ENCODE measurements at regions of chr10 and their contacts with region 1.

Region 1: DNA sequence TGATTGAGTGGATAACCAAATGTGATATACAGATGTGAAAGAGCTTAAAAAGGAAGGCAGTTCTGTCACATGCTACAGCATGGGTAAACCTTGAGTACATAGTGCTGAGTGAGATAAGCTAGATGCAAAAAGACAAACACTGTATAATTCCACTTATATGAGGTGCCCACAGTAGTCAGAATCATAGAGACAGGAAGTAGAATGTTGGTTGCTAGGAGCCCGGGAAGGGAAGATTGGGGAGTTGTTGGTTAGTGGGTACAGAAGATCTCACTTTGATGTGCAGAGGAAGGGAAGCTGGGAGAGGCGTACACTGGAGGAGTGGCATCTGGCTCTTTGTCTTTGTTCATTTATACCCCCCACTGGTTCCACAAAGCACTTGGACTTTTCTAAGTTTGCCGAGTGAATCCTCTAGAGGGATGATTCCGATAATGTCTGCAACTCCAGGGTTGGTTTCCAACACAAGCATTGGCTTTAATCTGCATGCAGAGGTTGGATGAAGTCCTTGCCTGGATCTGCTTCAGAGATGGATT is 39.5 kb downstream of the TSPAN14 start:
- DNase-seq: peak in 5 of 10 donors; percentile 42 to 54 (median 47)
- ATAC-seq: peak; percentile 76 to 78
- H3K4me3 Mint-ChIP-seq: peak overlapping the region; percentile 17 to 84 (median 68)
- H3K27ac Mint-ChIP-seq: peak overlapping the region; percentile 6 to 97 (median 86)
- H3K4me1 Mint-ChIP-seq: peaks cover 57 to 98% (median 97%) of the 10 kb centered on the region in 4 donors
- H3K27me3 Mint-ChIP-seq: no peaks in the 10 kb centered on the region

Region 2: GRCh38 chr10:80413271-80413996 is 80.2 kb before region 1 on chr10:
- POLR2A ChIA-PET with region 1: no interaction called
- DNase-seq: no peak
- ATAC-seq: no peak
- H3K4me3 Mint-ChIP-seq: no peak overlapping the region
- H3K27ac Mint-ChIP-seq: peak overlapping the region in 2 of 10 donors; percentile 40 to 45
- H3K4me1 Mint-ChIP-seq: peaks cover 12 to 45% (median 25%) of the 10 kb centered on the region in 4 donors
- H3K27me3 Mint-ChIP-seq: no peaks in the 10 kb centered on the region

Region 3: GRCh38 chr10:80453701-80454513 is 39.7 kb before region 1 on chr10 and contains the start of gene TSPAN14:
- POLR2A ChIA-PET with region 1: interaction called, 914 read pairs
- DNase-seq: peak; percentile 47 to 80 (median 68)
- ATAC-seq: peak; percentile 61 to 71
- H3K4me3 Mint-ChIP-seq: peak within 1 kb of the TSS in 9 of 10 donors; percentile 85 to 99 (median 98)
- H3K27ac Mint-ChIP-seq: peak within 1 kb of the TSS; percentile 94 to 100 (median 97)
- H3K4me1 Mint-ChIP-seq: peaks cover 19 to 52% (median 42%) of the 10 kb centered on the region in 4 donors
- H3K27me3 Mint-ChIP-seq: no peaks in the 10 kb centered on the region
- polyA plus RNA-seq, gene TSPAN14: 152 to 293 (median 155) TPM

Region 4: DNA sequence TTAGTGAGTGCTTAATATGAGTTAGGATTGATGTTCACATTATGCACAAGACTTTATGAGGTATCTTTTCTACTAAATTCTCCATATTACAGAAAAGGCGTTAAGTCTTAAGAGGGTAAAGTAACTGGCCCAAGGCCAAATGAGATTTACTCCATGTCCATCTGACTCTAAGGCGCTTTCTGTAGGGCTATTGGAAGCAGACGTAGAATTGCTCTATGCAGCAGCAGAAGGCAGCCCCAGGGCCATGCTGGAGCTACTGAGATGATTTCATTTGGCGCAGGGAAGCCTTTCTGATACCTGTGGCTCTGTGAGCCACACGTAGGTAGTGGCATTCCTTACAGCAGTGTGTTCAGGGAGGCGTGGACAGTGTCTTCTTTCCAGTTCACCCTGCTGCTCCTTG is 177.2 kb after region 1 on chr10:
- POLR2A ChIA-PET with region 1: no interaction called
- DNase-seq: no peak
- ATAC-seq: no peak
- H3K4me3 Mint-ChIP-seq: no peak overlapping the region
- H3K27ac Mint-ChIP-seq: no peak overlapping the region
- H3K4me1 Mint-ChIP-seq: no peaks in the 10 kb centered on the region
- H3K27me3 Mint-ChIP-seq: peaks cover 0 to 13% (median 8%) of the 10 kb centered on the region in 5 donors

Measured in naive thymus-derived CD8-positive, alpha-beta T cell (primary cell).